Posterior cingulate gyrus (tissue), 11 donors: ENCODE measurements at regions of chr6 and their contacts with region 1.

Region 1: DNA sequence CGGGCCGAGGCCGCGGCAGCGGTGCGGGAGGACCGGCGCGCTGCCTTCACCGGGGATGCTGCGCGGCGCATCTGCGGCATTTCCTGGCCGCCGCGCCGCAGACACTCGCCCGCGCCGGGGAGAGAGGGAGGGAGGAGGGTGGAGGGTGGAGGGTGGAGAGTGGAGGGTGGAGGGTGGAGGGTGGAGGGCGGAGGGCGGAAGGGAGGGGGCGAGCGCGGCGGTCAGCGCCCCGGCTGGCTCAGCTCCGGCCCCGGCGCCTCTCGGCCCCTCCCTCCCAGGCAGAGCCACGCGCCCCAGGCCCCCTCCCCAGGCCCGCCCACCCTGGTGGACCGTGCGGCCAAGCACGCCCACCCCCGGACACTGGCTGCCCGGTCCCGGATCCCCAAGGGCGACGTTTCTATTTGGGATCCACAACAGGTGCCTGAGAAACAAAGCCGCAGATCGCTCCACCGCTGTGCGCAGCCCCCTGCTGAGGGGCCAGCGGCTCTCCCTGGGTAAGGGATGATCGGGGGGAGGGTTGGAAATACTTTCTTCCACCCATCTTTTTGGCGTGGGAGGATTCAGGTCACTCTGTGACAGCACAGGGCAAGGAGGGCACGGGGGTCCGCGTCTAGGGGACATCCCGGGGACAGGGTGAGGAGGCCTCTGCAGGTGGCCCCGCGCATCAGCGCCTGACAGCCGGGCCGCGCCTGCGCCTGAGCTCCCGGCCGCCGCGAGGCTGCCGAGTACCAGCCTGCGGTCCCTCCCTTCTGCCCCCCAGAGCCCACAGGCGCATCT is 111.1 kb upstream of the BEND6 start:
- DNase-seq: peak; percentile 72 to 98 (median 79)

Region 2: DNA sequence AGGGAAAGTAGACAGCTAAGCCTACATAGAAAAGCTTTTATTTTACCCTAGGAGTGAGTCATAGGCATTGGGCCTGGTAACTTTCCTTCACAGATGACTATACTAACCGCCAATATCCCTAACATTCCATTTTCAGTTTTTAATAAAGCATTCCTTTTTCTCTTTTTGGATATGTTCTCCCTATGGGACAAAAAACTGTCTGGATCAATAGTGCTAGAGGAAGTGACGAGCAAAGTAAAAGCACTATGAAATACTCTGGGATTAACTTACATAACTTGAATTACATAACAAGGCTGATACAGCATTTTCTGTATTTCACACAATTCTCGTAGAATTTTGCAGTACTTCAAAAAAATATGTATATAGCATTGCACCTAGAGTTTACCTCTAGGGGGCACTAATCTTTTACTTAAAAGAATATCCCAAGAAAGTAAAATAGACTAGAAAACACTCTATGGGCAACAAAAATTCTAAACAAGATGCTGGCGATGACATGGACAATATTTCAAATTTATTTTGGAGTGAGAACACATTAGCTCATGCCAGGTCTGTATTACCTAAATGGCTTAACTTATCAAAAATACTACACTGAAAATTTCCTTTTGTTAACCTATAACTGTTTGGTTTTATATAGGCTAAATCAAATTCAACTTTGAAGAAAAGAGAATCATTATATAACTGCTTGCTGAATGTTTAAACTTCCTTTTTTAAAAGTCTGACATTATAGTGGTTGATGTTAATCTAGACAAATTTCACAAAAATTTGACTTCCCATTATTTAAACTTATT is 134.8 kb before region 1 on chr6:
- intact Hi-C with region 1: no loop called
- DNase-seq: no peak

Region 3: GRCh38 chr6:56757588-56757984 is 86.2 kb before region 1 on chr6:
- intact Hi-C with region 1: loop called (anchors 2 kb)
- DNase-seq: peak in 2 of 10 donors; percentile 51 to 83